ENCODE measurements at regions of chr22 and their contacts with region 1.

Region 1: DNA sequence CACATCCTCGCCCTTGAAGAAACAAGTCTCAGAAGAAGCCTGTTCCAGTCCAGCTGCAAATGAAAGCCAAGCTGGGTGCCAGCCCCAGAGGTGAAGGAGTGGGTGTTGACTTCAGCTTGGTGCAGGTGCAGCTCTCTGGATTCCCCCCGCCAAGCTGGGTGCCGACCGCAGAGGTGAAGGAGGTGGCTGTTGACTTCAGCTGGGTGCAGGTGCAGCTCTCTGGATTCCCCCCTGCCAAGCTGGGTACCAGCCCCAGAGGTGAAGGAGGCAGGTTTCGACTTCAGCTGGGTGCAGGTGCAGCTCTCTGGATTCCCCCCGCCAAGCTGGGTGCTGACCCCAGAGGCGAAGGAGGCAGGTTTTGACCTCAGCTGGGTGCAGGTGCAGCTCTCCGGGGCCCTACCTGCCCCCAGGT is 1234.0 kb downstream of the TBC1D22A start:
- DNase-seq: peak; percentile 95
- H3K4me3 ChIP-seq: no peak overlapping the region
- H3K27ac ChIP-seq: peak overlapping the region; percentile 83
- H3K4me1 ChIP-seq: peaks cover 36% of the 10 kb centered on the region
- CTCF ChIP-seq: no peak

Region 2: DNA sequence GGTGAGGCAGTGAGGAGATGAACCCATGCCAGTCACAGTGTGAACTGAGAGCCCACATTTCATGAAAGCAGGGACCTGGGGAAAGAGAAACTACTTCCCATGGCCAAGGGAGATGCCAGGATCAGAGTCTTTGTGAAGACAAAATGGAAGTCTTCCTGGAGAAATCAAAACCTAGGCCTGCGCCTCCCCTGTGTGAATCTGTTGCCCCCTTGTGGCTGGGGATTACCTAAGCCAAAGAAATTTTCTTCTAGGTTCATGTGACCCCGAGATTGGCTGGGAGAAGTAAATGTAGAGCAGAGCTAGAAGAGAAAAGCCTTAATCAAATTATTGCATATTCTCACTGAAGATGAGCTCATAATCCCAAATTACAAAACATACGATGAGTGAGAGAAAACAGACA is 158.7 kb before region 1 on chr22:
- CTCF ChIA-PET with region 1: no interaction called
- POLR2A ChIA-PET with region 1: no interaction called
- intact Hi-C with region 1: loop called (anchors 2 kb)
- DNase-seq: peak; percentile 65
- H3K4me3 ChIP-seq: no peak overlapping the region
- H3K27ac ChIP-seq: no peak overlapping the region
- H3K4me1 ChIP-seq: peaks cover 28% of the 10 kb centered on the region
- CTCF ChIP-seq: peak; percentile 86

Region 3: GRCh38 chr22:47976219-47976618 is 20.2 kb before region 1 on chr22:
- CTCF ChIA-PET with region 1: no interaction called
- POLR2A ChIA-PET with region 1: no interaction called
- intact Hi-C with region 1: no loop called
- DNase-seq: no peak
- H3K4me3 ChIP-seq: no peak overlapping the region
- H3K27ac ChIP-seq: no peak overlapping the region
- H3K4me1 ChIP-seq: no peaks in the 10 kb centered on the region
- CTCF ChIP-seq: no peak

Region 4: DNA sequence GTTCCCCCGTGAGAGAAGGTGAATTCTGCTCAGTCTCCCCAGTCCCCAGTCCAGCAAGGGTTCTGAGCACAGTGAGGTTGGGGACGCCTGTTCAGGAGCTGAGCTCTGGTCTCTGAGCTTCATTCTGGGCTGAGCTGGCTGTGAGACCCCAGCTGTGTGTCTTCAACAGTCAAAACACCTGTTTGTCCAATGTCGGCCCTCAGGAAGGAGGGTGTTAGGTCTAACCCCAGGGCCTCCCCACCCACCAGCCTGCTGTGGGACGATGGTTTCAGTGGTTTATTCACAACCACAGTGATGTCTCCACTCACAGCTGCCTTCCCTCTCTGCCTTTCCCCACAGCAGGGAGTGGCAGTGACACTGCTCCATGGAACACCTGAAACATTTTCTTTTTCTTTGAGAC is 48.9 kb after region 1 on chr22:
- CTCF ChIA-PET with region 1: no interaction called
- POLR2A ChIA-PET with region 1: interaction called, 10 read pairs
- intact Hi-C with region 1: loop called (anchors 1 kb)
- DNase-seq: peak; percentile 76
- H3K4me3 ChIP-seq: no peak overlapping the region
- H3K27ac ChIP-seq: peak overlapping the region; percentile 18
- H3K4me1 ChIP-seq: peaks cover 33% of the 10 kb centered on the region
- CTCF ChIP-seq: no peak

Region 5: DNA sequence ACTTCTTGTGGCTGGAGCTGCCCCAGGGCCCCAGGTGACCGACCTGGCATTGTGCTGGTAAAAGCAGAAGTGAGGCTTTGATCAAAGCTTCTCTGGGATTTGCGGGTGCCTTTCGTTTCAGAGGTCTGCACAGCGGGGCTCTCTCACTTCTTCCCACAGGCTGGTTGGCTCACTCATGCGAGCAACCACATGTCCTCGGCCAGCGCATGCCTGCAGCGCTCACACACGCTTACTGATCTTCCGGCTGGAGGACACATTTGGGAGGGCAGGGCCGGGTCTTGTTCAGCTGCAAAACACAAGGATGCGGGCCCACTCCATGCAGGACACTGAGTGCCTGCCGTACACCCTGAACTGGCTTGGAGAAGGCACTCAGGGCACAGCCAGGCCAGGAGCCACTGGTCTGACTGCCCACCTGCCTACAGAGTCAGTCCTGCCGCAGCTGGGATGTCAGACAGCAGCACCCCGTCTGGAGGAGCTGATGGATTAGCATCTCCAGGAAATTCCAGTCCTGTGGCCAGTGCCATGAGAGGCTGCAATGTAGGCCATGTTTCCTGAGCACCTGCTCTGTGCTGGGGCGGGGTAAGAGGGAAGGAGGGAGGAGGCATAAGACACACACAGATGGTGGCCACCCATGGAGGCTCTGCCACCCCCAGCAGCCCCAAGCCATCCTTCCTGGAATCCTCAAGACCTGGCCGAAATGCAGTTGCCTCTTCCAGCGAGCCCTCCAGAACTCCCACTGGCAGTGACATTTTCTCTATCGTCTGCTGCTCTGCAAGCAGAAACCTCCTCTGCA is 448.1 kb after region 1 on chr22:
- CTCF ChIA-PET with region 1: no interaction called
- POLR2A ChIA-PET with region 1: no interaction called
- intact Hi-C with region 1: loop called (anchors 1 kb)
- DNase-seq: peak; percentile 92
- H3K4me3 ChIP-seq: peak overlapping the region; percentile 38
- H3K27ac ChIP-seq: peak overlapping the region; percentile 55
- H3K4me1 ChIP-seq: peaks cover 34% of the 10 kb centered on the region
- CTCF ChIP-seq: no peak

Measured in OCI-LY7 (cell line).